Right ventricle myocardium superior (tissue), 1 donor: ENCODE measurements at regions of chr15 and their contacts with region 1.

Region 1: GRCh38 chr15:95596496-95596895 is 734.0 kb upstream of the NR2F2 start:
- DNase-seq: no peak
- ATAC-seq: no peak

Region 2: DNA sequence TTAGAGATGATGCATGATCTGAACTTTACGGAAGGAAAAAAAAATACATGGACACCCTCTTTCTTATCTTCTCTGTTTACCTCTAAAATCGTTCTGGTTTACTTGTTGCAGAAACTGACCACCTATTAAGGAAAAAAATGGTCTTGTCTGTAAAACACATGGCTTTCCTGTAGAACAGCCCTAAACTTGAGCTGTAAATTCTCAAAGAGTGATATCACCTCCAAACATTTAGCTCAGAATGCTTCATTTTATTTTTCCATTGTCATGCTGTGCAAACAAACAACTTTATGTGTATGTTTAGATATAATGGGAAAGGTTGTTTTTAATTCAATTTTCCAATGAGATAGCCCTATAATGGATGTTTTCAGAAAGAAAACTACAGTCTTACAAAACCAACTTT is 496.6 kb after region 1 on chr15:
- intact Hi-C with region 1: loop called (anchors 5 kb)
- DNase-seq: no peak
- ATAC-seq: no peak